ENCODE measurements at regions of chr17 and their contacts with region 1.

Region 1: DNA sequence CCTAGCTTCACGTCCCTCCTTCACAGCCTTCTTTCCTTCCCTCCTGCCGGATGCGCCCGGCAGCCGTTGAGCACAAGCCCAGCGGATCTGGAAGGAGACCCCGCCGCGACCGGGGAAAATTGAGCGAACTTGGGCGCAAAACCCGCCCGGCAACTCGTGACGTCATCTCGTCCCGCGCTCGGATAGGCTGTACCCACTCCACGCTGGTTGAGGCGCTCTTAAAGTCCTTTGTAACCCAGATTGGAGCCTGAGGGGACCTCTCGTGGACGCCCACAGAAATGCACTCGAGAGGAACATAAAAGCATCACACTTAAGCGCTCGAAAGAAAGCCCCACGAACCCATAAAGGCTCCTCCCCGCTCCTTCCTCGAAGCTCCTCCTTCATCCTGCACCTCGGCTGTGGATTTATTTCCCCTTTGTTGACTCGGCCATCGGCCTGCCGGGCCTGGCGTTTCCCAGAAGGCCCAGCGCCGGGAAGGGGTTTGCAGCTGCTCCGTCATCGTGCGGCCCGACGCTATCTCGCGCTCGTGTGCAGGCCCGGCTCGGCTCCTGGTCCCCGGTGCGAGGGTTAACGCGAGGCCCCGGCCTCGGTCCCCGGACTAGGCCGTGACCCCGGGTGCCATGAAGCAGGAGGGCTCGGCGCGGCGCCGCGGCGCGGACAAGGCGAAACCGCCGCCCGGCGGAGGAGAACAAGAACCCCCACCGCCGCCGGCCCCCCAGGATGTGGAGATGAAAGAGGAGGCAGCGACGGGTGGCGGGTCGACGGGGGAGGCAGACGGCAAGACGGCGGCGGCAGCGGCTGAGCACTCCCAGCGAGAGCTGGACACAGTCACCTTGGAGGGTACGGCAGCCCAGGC is at the start of gene PSMD3:
- DNase-seq: peak; percentile 99
- ATAC-seq: peak; percentile 98
- H3K4me3 ChIP-seq: peak within 1 kb of the TSS; percentile 57 to 72
- H3K27ac ChIP-seq: peak within 1 kb of the TSS in 1 of 2 donors; percentile 74
- H3K4me1 ChIP-seq: peaks cover 0 to 3% of the 10 kb centered on the region in 2 donors
- H3K27me3 ChIP-seq: no peaks in the 10 kb centered on the region
- total RNA-seq, gene PSMD3: 60.5 to 60.9 TPM

Region 2: GRCh38 chr17:39872751-39873150 is 107.8 kb before region 1 on chr17:
- intact Hi-C with region 1: loop called (anchors 10 kb)
- DNase-seq: no peak
- ATAC-seq: no peak
- H3K4me3 ChIP-seq: no peak overlapping the region
- H3K27ac ChIP-seq: no peak overlapping the region
- H3K4me1 ChIP-seq: no peaks in the 10 kb centered on the region
- H3K27me3 ChIP-seq: no peaks in the 10 kb centered on the region

Region 3: GRCh38 chr17:39889200-39889599 is 91.4 kb before region 1 on chr17:
- intact Hi-C with region 1: no loop called
- DNase-seq: no peak
- ATAC-seq: no peak
- H3K4me3 ChIP-seq: no peak overlapping the region
- H3K27ac ChIP-seq: no peak overlapping the region
- H3K4me1 ChIP-seq: no peaks in the 10 kb centered on the region
- H3K27me3 ChIP-seq: peaks cover 0 to 2% of the 10 kb centered on the region in 2 donors

Region 4: DNA sequence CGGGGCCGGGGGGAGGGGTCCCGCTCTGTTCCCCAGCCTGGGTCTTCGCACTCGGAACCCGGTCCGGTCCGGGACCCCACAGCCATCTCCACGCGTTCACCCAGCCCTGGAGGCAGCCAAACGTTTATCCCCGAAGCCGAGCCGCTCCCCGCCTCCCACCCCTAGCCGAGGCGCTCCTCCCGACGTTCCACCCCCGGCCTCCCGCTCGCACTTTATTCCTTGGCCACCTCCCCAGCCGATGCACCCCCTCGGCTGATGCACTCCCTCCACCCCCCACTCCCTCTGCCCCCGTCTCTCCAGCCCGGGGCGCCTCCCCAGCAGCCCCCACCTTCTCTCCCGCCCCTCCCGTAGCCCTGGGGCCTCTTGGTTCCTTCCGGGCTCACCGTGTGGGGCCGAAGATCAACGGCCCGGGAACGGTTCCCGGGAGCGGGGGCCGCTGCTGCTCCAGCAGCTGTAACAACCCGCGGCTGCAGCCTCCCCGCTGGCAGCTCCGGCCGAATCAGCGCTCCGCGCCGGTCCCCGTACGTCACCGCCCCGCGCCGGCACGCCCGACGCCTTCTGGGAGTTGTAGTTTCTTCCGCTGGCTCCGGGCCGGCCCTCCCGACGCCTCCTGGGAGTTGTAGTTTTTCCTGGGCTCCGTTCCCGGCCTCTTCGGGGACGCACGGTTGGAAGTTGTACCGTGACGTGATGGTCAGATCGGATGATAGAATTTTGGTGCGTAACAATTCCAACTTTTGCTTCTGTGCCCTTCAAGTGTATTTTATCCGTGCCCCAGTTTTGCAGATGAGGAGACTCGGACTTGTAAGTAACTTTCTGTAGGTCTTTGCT is 53.3 kb before region 1 on chr17 and contains the starts of genes LRRC3C and ORMDL3:
- intact Hi-C with region 1: loop called in 1 of 2 experiments (anchors 5 kb)
- DNase-seq: peak; percentile 96 to 98
- ATAC-seq: peak; percentile 96
- H3K4me3 ChIP-seq: peak within 1 kb of the TSS; percentile 76 to 97
- H3K27ac ChIP-seq: peak within 1 kb of the TSS; percentile 99 to 100
- H3K4me1 ChIP-seq: peaks cover 3 to 6% of the 10 kb centered on the region in 2 donors
- H3K27me3 ChIP-seq: no peaks in the 10 kb centered on the region
- total RNA-seq, gene LRRC3C: not detected
- total RNA-seq, gene ORMDL3: 44.2 to 45.0 TPM

Region 5: GRCh38 chr17:39963829-39964228 is 16.8 kb before region 1 on chr17:
- intact Hi-C with region 1: loop called in 1 of 2 experiments (anchors 1 kb)
- DNase-seq: no peak
- ATAC-seq: no peak
- H3K4me3 ChIP-seq: no peak overlapping the region
- H3K27ac ChIP-seq: no peak overlapping the region
- H3K4me1 ChIP-seq: no peaks in the 10 kb centered on the region
- H3K27me3 ChIP-seq: no peaks in the 10 kb centered on the region